Activated CD8-positive, alpha-beta T cell treated with anti-CD3 and anti-CD28 coated beads, Interleukin-2, amount 10 ng/mL, durations not matched to agents 7 days and 5 days (primary cell): ENCODE measurements at regions of chr1 and their contacts with region 1.

Region 1: GRCh38 chr1:26284597-26285360 is 4.9 kb downstream of the SH3BGRL3 start:
- DNase-seq: peak; percentile 97
- ATAC-seq: peak; percentile 74
- H3K4me3 Mint-ChIP-seq: peak overlapping the region; percentile 89
- H3K27ac Mint-ChIP-seq: peak overlapping the region; percentile 96
- H3K4me1 Mint-ChIP-seq: peaks cover 89% of the 10 kb centered on the region
- H3K27me3 Mint-ChIP-seq: no peaks in the 10 kb centered on the region

Region 2: DNA sequence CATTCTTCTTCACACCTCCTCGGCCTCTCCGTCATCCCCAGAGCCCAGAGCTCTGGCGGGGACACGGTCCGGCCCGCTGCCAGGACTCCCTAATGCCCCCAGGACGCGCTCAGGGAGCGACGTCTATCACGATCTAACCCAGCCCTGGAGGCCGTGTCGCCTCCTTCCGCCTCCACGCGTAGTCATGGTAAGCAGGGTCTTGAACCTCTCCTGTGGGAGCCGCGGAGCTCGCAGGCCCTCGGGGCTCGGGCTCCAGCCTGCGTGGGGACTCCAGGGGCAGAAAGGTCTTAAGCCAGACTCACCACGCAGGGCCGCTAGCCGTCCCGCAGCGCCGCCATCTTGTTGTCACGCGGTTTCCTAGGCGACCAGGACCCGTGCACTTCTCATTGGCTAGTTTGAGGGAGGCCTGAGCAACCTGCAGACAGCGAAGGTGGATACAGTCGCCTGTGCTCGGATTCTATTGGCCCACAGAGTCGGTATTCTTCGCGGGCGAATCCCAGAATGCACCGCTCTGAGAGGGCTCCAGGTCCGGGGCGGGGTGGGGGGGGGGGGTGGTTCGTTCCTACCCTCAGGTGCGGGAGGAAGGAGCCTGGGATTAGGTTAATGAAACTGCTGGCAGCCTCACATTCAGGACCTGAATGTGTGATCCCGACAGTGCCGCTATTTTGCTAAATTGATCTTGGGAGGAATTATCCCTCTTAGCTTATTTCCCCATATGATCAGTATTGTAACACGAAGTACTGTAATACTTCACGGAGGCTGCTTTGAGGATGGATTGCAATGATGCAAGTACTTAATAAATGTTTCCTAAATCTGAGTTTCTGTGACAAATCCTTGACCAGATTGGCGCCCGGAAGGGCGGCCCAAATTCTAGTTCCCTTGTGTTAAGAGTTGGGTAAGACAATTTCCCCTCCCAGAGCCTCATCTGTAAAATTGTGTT is 21.8 kb after region 1 on chr1 and contains the start of gene UBXN11:
- CTCF ChIA-PET with region 1: interaction called, 159 read pairs
- POLR2A ChIA-PET with region 1: interaction called, 79 read pairs
- DNase-seq: peak; percentile 97
- ATAC-seq: peak; percentile 99
- H3K4me3 Mint-ChIP-seq: peak within 1 kb of the TSS; percentile 99
- H3K27ac Mint-ChIP-seq: peak within 1 kb of the TSS; percentile 96
- H3K4me1 Mint-ChIP-seq: peaks cover 38% of the 10 kb centered on the region
- H3K27me3 Mint-ChIP-seq: no peaks in the 10 kb centered on the region
- total RNA-seq, gene UBXN11: 34.4 to 40.9 TPM

Region 3: GRCh38 chr1:26327956-26328362 is 43.2 kb after region 1 on chr1:
- CTCF ChIA-PET with region 1: interaction called, 591 read pairs
- POLR2A ChIA-PET with region 1: interaction called, 409 read pairs
- DNase-seq: no peak
- ATAC-seq: no peak
- H3K4me3 Mint-ChIP-seq: no peak overlapping the region
- H3K27ac Mint-ChIP-seq: peak overlapping the region; percentile 20
- H3K4me1 Mint-ChIP-seq: peaks cover 11% of the 10 kb centered on the region
- H3K27me3 Mint-ChIP-seq: no peaks in the 10 kb centered on the region

Region 4: GRCh38 chr1:26358411-26359384 is 73.9 kb after region 1 on chr1:
- CTCF ChIA-PET with region 1: interaction called, 58 read pairs
- POLR2A ChIA-PET with region 1: interaction called, 4 read pairs
- DNase-seq: peak; percentile 89
- ATAC-seq: peak; percentile 85
- H3K4me3 Mint-ChIP-seq: peak overlapping the region; percentile 47
- H3K27ac Mint-ChIP-seq: peak overlapping the region; percentile 68
- H3K4me1 Mint-ChIP-seq: peaks cover 70% of the 10 kb centered on the region
- H3K27me3 Mint-ChIP-seq: peaks cover 8% of the 10 kb centered on the region

Region 5: GRCh38 chr1:26372039-26372438 is 87.3 kb after region 1 on chr1:
- CTCF ChIA-PET with region 1: interaction called, 33 read pairs
- POLR2A ChIA-PET with region 1: interaction called, 3 read pairs
- DNase-seq: no peak
- ATAC-seq: no peak
- H3K4me3 Mint-ChIP-seq: no peak overlapping the region
- H3K27ac Mint-ChIP-seq: peak overlapping the region; percentile 90
- H3K4me1 Mint-ChIP-seq: peaks cover 87% of the 10 kb centered on the region
- H3K27me3 Mint-ChIP-seq: peaks cover 2% of the 10 kb centered on the region

Region 6: DNA sequence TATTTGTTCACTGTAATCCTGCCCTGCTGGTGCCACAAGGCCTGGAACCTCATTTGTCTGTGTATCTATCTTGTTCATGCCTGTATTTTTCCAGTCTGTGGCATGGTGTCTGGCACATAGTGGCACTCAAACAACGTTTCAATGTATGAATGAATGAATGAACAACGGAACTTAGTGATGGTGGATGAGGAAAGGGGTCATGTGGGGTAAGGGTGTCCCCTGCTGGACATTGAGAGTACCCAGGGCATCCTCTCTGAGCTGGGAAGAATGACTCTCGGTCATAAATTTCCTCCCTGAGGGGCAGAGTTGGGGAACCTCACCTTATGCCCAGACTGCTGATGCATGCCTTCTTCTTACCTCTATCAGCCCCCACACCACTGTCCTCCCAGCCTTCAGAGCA is 106.7 kb after region 1 on chr1:
- CTCF ChIA-PET with region 1: interaction called, 57 read pairs
- POLR2A ChIA-PET with region 1: no interaction called
- DNase-seq: peak; percentile 78
- ATAC-seq: peak; percentile 73
- H3K4me3 Mint-ChIP-seq: no peak overlapping the region
- H3K27ac Mint-ChIP-seq: peak overlapping the region; percentile 35
- H3K4me1 Mint-ChIP-seq: peaks cover 61% of the 10 kb centered on the region
- H3K27me3 Mint-ChIP-seq: peaks cover 3% of the 10 kb centered on the region